ENCODE measurements at regions of chr12 and their contacts with region 1.

Region 1: GRCh38 chr12:109927622-109928021 is 27.5 kb downstream of the TCHP start:
- DNase-seq: peak in 12 of 14 experiments; percentile 11 to 64 (median 29)
- ATAC-seq: peak; percentile 68
- H3K4me3 ChIP-seq: no peak overlapping the region
- H3K4me3 Mint-ChIP-seq: no peak overlapping the region
- H3K27ac ChIP-seq: no peak overlapping the region
- H3K27ac Mint-ChIP-seq: no peak overlapping the region
- H3K4me1 ChIP-seq: no peaks in the 10 kb centered on the region
- H3K4me1 Mint-ChIP-seq: no peaks in the 10 kb centered on the region
- H3K27me3 ChIP-seq: no peaks in the 10 kb centered on the region
- H3K27me3 Mint-ChIP-seq: no peaks in the 10 kb centered on the region
- CTCF ChIP-seq: peak; percentile 48

Region 2: DNA sequence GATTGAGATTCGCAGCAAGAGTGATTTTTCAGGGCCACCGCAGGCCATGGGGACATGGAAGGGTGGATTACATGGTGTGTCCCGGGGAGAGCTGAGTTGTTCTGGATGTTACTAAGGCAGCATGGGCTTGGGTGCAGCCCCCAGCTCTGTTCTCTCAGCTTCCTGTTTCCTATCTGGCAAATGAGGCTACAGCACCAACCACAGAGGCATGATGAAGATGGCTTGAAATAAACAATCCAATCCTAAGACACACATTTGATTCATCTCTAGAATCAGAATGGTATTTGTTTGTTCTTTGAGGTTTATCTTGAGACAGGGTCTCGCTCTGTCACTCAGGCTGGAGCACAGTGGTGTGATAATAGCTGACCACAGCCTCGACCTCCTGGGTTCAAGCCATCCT is 68.9 kb before region 1 on chr12:
- CTCF ChIA-PET with region 1: interaction called, 5 read pairs
- POLR2A ChIA-PET with region 1: interaction called, 3 read pairs
- intact Hi-C with region 1: loop called (anchors 1 to 2 kb)
- DNase-seq: no peak
- ATAC-seq: no peak
- H3K4me3 ChIP-seq: no peak overlapping the region
- H3K4me3 Mint-ChIP-seq: no peak overlapping the region
- H3K27ac ChIP-seq: no peak overlapping the region
- H3K27ac Mint-ChIP-seq: no peak overlapping the region
- H3K4me1 ChIP-seq: peaks cover 1% of the 10 kb centered on the region
- H3K4me1 Mint-ChIP-seq: peaks cover 3% of the 10 kb centered on the region
- H3K27me3 ChIP-seq: no peaks in the 10 kb centered on the region
- H3K27me3 Mint-ChIP-seq: no peaks in the 10 kb centered on the region
- CTCF ChIP-seq: no peak

Region 3: DNA sequence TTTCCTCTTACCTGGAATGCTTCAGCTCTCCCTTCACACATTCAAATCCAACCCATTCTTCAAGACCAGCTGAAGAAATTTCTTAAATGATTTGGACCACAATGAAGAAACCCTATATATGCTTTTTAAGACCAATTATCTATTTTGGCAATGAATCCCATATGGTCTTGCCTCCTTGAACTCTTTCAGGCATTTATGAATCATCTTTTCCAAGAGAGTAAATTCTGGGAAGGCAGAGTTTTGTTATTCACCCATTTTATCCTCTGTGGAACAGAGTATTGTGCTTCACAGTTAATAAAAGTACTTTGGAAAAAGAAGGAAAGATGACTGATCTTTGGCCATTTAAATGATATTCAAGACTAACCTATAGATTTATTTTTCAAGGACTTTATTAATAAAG is 54.6 kb after region 1 on chr12:
- CTCF ChIA-PET with region 1: no interaction called
- POLR2A ChIA-PET with region 1: no interaction called
- intact Hi-C with region 1: no loop called
- DNase-seq: no peak
- ATAC-seq: no peak
- H3K4me3 ChIP-seq: no peak overlapping the region
- H3K4me3 Mint-ChIP-seq: no peak overlapping the region
- H3K27ac ChIP-seq: peak overlapping the region in 1 of 2 donors; percentile 7
- H3K27ac Mint-ChIP-seq: peak overlapping the region; percentile 80
- H3K4me1 ChIP-seq: peaks cover 26% of the 10 kb centered on the region
- H3K4me1 Mint-ChIP-seq: peaks cover 39% of the 10 kb centered on the region
- H3K27me3 ChIP-seq: no peaks in the 10 kb centered on the region
- H3K27me3 Mint-ChIP-seq: no peaks in the 10 kb centered on the region
- CTCF ChIP-seq: no peak

Measured in CD4-positive, alpha-beta T cell (primary cell).